ENCODE measurements at regions of chr11 and their contacts with region 1.

Region 1: GRCh38 chr11:30050428-30050827 is 33.6 kb upstream of the KCNA4 start:
- DNase-seq: no peak
- ATAC-seq: no peak

Region 2: DNA sequence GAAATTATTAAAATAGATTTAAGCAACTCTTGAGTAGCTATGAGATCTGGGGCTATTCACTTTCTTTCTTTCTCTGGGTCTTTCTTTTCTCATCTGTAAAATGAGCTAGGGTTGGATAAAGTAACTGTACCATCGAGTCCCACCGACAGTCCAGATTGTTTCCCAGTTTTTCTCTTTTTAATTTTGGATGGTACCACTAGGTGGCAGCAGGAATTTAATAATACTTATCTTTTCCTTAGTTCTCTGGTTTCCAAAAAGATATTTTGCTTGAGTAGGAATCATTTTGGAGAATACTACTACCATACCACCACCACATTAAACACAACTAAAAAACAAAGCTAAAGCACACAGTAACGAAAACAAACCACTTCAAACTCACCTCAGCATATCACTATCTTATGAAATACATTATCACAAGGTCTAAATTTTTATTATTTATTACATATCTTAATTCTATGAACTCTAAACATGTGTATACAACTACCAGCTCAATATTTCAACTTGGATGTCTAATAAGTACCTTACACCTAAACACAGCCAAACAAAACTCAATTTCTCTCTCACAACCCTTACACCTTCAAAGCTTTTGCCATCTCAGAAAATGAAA is 617.6 kb before region 1 on chr11:
- intact Hi-C with region 1: loop called (anchors 5 kb)
- DNase-seq: no peak
- ATAC-seq: no peak

Region 3: GRCh38 chr11:30392221-30392784 is 341.9 kb after region 1 on chr11:
- intact Hi-C with region 1: no loop called
- DNase-seq: no peak
- ATAC-seq: peak; percentile 15